ENCODE measurements at regions of chr17 and their contacts with region 1.

Region 1: DNA sequence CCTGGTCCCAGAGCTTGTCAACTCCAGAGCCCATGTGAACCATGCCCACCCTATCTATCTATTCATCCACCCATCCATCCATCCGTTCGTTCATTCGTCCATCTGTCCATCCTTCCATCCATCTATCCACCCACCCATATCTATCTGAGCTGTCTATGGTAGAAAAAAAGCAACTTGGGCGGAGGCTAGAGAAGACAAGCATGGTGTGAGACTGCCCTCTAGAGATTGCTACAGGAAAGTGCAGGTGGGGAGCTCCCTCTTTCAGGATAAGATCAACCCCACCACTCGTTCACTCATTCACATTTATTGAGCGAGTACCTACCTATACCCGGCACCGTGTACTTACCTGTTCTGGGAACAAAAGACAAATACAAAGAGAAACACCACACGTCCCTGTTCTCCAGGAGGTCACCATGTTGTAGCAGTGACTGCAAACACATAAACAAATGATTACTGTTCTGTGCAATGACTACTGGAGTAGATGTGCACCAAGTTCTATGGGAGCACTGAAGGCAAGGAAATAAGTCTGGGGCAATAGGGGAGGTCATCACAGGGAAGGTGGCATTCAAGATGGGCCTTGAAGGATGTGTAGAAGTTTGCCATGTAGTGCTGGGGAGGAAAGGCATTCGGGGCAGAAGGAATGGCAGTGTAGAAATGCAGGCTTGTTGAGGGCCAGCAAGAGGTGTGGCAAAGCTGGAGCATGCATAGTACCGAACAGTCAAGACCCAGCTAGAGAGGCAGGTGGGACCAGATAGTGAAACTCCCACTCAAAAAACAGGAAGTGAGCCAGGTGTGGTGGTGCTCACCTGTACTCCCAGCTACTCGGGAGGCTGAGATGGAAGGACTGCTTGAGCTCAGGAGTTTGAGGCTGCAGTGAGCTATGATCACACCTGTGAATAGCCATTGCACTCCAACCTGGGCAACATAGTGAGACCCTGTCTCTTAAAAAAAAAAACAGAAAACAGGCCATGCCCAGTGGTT is 13.4 kb upstream of the ATP5MC1 start:
- DNase-seq: no peak
- H3K4me3 ChIP-seq: no peak overlapping the region
- H3K27ac ChIP-seq: no peak overlapping the region
- H3K4me1 ChIP-seq: no peaks in the 10 kb centered on the region
- H3K27me3 ChIP-seq: no peaks in the 10 kb centered on the region
- CTCF ChIP-seq: peak; percentile 73 to 90 (median 89)
- POLR2A ChIP-seq: no peak

Region 2: GRCh38 chr17:48747445-48748363 is 131.5 kb before region 1 on chr17:
- intact Hi-C with region 1: no loop called
- DNase-seq: no peak
- H3K4me3 ChIP-seq: no peak overlapping the region
- H3K27ac ChIP-seq: no peak overlapping the region
- H3K4me1 ChIP-seq: no peaks in the 10 kb centered on the region
- H3K27me3 ChIP-seq: peaks cover 15 to 100% of the 10 kb centered on the region in 2 donors
- CTCF ChIP-seq: no peak
- POLR2A ChIP-seq: no peak

Region 3: DNA sequence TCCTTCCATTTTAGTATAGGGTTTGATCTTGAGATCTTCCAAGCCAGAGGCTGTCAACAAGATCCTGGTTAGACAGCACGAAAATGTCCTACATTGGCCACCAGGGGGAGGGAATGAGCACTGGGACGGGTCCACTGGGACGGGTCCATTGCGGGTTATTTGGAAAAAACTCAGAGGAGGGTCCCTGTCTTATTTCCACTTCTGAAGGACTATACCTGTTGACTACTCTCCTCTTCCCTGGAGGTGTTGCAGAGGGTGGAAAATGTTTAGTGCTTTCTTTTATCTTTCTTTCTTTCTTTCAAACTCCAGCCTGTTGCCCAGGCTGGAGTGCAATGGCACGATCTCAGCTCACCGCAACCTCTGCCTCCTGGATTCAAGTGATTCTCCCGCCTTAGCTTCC is 64.7 kb before region 1 on chr17:
- intact Hi-C with region 1: loop called (anchors 5 kb)
- DNase-seq: no peak
- H3K4me3 ChIP-seq: no peak overlapping the region
- H3K27ac ChIP-seq: no peak overlapping the region
- H3K4me1 ChIP-seq: no peaks in the 10 kb centered on the region
- H3K27me3 ChIP-seq: peaks cover 0 to 5% of the 10 kb centered on the region in 2 donors
- CTCF ChIP-seq: peak; percentile 56 to 71 (median 71)
- POLR2A ChIP-seq: no peak